ENCODE measurements at regions of chr7 and their contacts with region 1.

Region 1: DNA sequence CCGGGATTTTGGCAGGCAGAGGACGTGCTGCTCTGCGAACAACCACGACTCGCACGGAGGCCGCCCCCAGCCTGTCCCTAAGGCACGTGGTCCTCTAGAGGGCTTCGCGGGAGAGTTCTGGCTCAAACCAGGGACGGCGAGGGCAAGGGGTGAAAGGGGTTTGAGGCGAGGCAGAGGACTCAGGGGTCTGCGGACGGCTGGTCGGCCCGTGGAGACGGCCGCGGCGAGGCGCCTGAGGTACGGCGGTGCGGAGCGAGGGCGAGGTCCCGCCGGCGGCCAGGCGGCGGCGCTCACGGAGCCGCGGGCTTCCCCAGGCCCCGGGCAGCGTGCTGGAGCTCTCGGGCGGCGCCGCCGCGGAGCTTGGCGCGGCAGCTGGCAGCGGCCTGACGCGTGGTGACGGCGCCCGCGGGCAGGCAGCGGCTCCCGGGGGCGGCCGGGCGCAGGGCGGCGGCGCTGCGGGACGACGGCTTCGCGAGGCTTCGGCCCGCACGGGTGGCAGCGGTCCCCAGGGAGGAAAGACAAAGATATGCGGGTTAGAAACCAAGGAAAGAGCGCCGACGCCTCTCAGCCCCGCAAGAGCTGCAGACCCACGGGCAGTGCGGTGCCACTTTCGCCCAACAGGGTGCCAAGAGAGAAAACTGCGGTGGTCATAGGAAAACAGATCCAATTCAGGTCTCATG is 44.8 kb downstream of the ZNF800 start:
- DNase-seq: no peak
- ATAC-seq: peak; percentile 99
- H3K4me3 ChIP-seq: peak overlapping the region; percentile 48; the same call in 1 of the 2 replicates
- H3K27ac ChIP-seq: no peak overlapping the region
- H3K4me1 ChIP-seq: no peaks in the 10 kb centered on the region
- H3K27me3 ChIP-seq: no peaks in the 10 kb centered on the region
- CTCF ChIP-seq: peak; percentile 47 to 79 (median 57); a peak in 5 of 6 replicates
- EP300 ChIP-seq: no peak
- POLR2A ChIP-seq: 0 out of 2 replicates have a peak, but pooled peaks have one; percentile 17
- RAD21 ChIP-seq: peak; percentile 36; the same call in 1 of the 2 replicates

Region 2: DNA sequence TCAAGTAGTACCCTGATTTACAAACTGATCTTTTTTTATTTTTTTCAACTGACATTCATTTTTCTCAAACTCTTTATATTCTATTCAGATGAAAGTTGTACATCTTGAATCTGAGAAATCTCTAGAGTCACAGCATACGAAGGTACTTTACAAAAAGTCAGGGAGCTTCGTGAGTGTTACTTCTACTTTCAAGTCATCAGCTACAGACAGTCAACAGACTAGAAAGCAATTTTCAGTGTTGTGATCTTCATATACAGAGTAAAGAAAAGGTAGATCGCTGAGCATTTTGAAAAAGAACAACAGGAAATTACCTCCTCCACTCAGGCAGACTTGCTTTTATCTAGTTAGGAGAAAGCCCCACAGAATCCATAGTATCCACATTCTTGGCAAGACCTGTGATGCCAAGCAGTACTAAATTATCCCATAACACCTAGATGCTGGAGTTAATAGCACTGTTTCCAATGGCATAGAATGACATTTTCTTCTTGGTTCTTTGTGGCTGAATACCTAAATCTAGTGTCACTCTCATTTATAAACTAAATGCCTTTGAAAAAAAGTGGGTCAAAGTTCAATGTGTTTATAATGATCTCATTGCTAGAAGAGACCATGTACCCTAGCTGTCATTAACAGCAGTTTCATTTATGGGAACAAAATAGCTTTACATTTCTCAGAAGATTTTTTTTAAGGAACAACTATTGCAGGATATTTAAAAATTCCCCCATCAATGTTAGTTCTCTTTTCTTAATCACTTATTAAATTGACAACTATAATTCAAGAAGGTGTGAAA is 56.8 kb after region 1 on chr7:
- CTCF ChIA-PET with region 1: interaction called, 19 read pairs
- POLR2A ChIA-PET with region 1: interaction called, 3 read pairs
- RAD21 ChIA-PET with region 1: interaction called, 5 read pairs
- SMC1A ChIA-PET with region 1: no interaction called
- in situ Hi-C with region 1: no loop called
- intact Hi-C with region 1: no loop called
- DNase-seq: no peak
- ATAC-seq: peak; percentile 93
- H3K4me3 ChIP-seq: no peak overlapping the region
- H3K27ac ChIP-seq: no peak overlapping the region
- H3K4me1 ChIP-seq: peaks cover 3% of the 10 kb centered on the region; the same call in 1 of the 2 replicates
- H3K27me3 ChIP-seq: peaks cover 0 to under 1% of the 10 kb centered on the region in 2 experiments; a peak in 2 of 4 replicates
- CTCF ChIP-seq: no peak
- EP300 ChIP-seq: no peak; a peak in 1 of 4 replicates
- POLR2A ChIP-seq: no peak
- RAD21 ChIP-seq: no peak

Region 3: GRCh38 chr7:127447326-127447945 is 99.7 kb after region 1 on chr7:
- CTCF ChIA-PET with region 1: interaction called, 31 read pairs
- POLR2A ChIA-PET with region 1: no interaction called
- RAD21 ChIA-PET with region 1: interaction called, 20 read pairs
- SMC1A ChIA-PET with region 1: interaction called, 17 read pairs
- in situ Hi-C with region 1: loop called (anchors 5 kb)
- intact Hi-C with region 1: loop called (anchors 2 kb)
- DNase-seq: peak; percentile 28
- ATAC-seq: peak; percentile 100
- H3K4me3 ChIP-seq: no peak overlapping the region
- H3K27ac ChIP-seq: no peak overlapping the region
- H3K4me1 ChIP-seq: no peaks in the 10 kb centered on the region
- H3K27me3 ChIP-seq: no peaks in the 10 kb centered on the region
- CTCF ChIP-seq: peak; percentile 64 to 85 (median 77)
- EP300 ChIP-seq: no peak
- POLR2A ChIP-seq: no peak
- RAD21 ChIP-seq: peak; percentile 87

Region 4: GRCh38 chr7:127514499-127514898 is 166.8 kb after region 1 on chr7:
- CTCF ChIA-PET with region 1: interaction called, 3 read pairs
- POLR2A ChIA-PET with region 1: no interaction called
- RAD21 ChIA-PET with region 1: no interaction called
- SMC1A ChIA-PET with region 1: interaction called, 5 read pairs
- in situ Hi-C with region 1: no loop called
- intact Hi-C with region 1: loop called (anchors 5 kb)
- DNase-seq: no peak
- ATAC-seq: peak; percentile 79
- H3K4me3 ChIP-seq: no peak overlapping the region
- H3K27ac ChIP-seq: no peak overlapping the region
- H3K4me1 ChIP-seq: no peaks in the 10 kb centered on the region
- H3K27me3 ChIP-seq: peaks cover 0 to 3% of the 10 kb centered on the region in 2 experiments; a peak in 1 of 4 replicates
- CTCF ChIP-seq: peak in 2 of 3 experiments; percentile 26 to 56; a peak in 3 of 6 replicates
- EP300 ChIP-seq: no peak
- POLR2A ChIP-seq: no peak
- RAD21 ChIP-seq: peak; percentile 54

Region 5: GRCh38 chr7:127667017-127667670 is 319.4 kb after region 1 on chr7:
- CTCF ChIA-PET with region 1: no interaction called
- POLR2A ChIA-PET with region 1: no interaction called
- RAD21 ChIA-PET with region 1: no interaction called
- SMC1A ChIA-PET with region 1: no interaction called
- in situ Hi-C with region 1: no loop called
- intact Hi-C with region 1: no loop called
- DNase-seq: no peak
- ATAC-seq: peak; percentile 52
- H3K4me3 ChIP-seq: no peak overlapping the region
- H3K27ac ChIP-seq: no peak overlapping the region
- H3K4me1 ChIP-seq: no peaks in the 10 kb centered on the region
- H3K27me3 ChIP-seq: no peaks in the 10 kb centered on the region
- CTCF ChIP-seq: no peak
- EP300 ChIP-seq: no peak
- POLR2A ChIP-seq: no peak
- RAD21 ChIP-seq: no peak

Measured in GM12878 (cell line).